Activated CD4-positive, alpha-beta T cell treated with anti-CD3 and anti-CD28 coated beads, Interleukin-2, amount 10 ng/mL, durations not matched to agents 7 days and 5 days (primary cell): ENCODE measurements at regions of chr18 and their contacts with region 1.

Region 1: DNA sequence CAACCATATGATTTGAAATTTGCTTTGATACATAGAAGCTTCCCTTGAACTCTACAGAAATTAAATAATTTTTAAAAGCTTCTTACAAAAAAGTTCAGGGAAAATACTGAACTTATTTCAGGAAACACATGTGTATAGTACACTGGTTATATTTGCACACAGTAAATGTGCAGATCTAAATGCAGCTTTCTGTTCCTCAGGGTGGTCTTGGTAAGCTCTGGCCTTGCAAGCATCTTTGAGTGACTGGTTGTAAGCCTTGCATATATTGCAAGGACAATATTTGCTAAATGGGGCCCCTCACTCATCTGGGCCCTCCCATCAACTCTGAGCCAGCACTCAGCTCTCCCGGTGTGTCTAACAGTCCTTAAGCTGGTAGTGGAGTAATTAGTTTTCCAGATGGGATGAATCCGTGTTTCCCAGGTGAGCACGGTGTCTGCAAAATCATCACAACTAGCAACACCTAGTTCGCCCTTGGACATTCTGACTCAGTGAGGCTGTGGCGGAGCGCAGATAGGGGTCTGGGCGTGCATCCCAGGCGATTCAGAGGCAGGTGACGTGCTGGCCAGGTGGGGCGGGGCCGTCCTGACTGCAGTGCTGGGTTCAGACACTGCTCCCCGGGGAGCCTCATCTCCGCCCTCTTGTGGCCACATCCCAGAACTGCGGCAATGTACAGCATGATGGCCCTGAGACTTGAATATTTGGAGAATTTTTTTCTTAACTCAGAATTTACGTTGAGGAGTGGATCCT is 149.6 kb downstream of the MBP start:
- DNase-seq: peak; percentile 87
- H3K4me3 Mint-ChIP-seq: no peak overlapping the region
- H3K27ac Mint-ChIP-seq: no peak overlapping the region
- H3K4me1 Mint-ChIP-seq: peaks cover 4% of the 10 kb centered on the region
- H3K27me3 Mint-ChIP-seq: no peaks in the 10 kb centered on the region

Region 2: GRCh38 chr18:76838182-76838581 is 144.8 kb before region 1 on chr18:
- CTCF ChIA-PET with region 1: no interaction called
- POLR2A ChIA-PET with region 1: no interaction called
- DNase-seq: no peak
- H3K4me3 Mint-ChIP-seq: no peak overlapping the region
- H3K27ac Mint-ChIP-seq: no peak overlapping the region
- H3K4me1 Mint-ChIP-seq: peaks cover 15% of the 10 kb centered on the region
- H3K27me3 Mint-ChIP-seq: no peaks in the 10 kb centered on the region

Region 3: GRCh38 chr18:76958692-76959341 is 24.2 kb before region 1 on chr18:
- CTCF ChIA-PET with region 1: interaction called, 18 read pairs
- POLR2A ChIA-PET with region 1: no interaction called
- DNase-seq: no peak
- H3K4me3 Mint-ChIP-seq: no peak overlapping the region
- H3K27ac Mint-ChIP-seq: no peak overlapping the region
- H3K4me1 Mint-ChIP-seq: peaks cover 32% of the 10 kb centered on the region
- H3K27me3 Mint-ChIP-seq: no peaks in the 10 kb centered on the region